Psoas muscle (tissue), 8 donors: ENCODE measurements at regions of chr20 and their contacts with region 1.

Region 1: DNA sequence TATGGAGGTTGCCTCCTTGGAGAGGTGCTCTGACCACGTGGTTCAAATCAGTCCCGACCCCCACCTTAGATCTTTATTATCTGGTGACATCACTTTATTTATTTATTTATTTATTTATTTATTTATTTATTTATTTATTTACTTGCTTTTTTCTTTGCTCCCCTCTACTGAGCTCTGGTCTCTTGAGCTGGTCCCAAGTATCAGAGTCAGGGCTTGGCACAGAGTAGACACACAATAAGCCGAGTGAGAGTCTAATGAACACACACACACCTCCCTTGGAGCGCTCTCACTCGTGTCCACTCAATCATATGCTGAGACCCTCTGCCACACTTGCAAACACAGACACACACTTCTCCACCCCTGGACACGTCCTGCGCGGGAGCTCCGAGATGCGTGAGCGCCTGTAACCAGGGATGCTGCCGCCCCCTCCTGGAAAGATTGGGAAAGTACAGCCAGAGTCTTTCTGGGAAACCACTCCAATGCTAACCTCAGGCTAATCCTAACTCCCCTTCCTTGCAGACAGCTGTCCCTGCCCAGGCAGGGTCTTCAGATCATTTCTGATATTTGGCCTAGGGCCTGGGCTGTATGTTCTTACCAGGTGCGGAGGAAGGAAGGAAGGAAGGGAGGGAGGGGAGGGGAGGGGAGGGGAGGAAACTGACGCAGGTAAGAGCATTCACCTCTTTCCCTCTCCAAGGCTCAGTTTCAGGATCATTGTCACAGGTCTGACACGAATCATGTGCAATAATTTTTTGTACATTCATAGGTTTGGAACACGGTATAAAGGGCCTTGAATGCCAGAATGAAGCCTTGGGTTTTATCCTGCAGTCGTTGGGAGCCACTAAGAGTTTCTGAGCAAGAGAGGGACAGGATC is 70.9 kb downstream of the STK35 start:
- DNase-seq: peak; percentile 73 to 82
- ATAC-seq: peak; percentile 79 to 98 (median 88)
- H3K4me3 ChIP-seq: no peak overlapping the region
- H3K27ac ChIP-seq: no peak overlapping the region
- H3K4me1 ChIP-seq: peaks cover 3% of the 10 kb centered on the region
- H3K27me3 ChIP-seq: no peaks in the 10 kb centered on the region
- CTCF ChIP-seq: peak; percentile 92

Region 2: GRCh38 chr20:1764136-1765033 is 408.2 kb before region 1 on chr20:
- intact Hi-C with region 1: loop called in 1 of 2 experiments (anchors 5 kb)
- DNase-seq: peak; percentile 69 to 72
- ATAC-seq: peak; percentile 79 to 92 (median 85)
- H3K4me3 ChIP-seq: no peak overlapping the region
- H3K27ac ChIP-seq: no peak overlapping the region
- H3K4me1 ChIP-seq: no peaks in the 10 kb centered on the region
- H3K27me3 ChIP-seq: no peaks in the 10 kb centered on the region
- CTCF ChIP-seq: peak; percentile 82

Region 3: GRCh38 chr20:1860446-1860845 is 312.1 kb before region 1 on chr20:
- intact Hi-C with region 1: no loop called
- DNase-seq: no peak
- ATAC-seq: no peak
- H3K4me3 ChIP-seq: no peak overlapping the region
- H3K27ac ChIP-seq: no peak overlapping the region
- H3K4me1 ChIP-seq: no peaks in the 10 kb centered on the region
- H3K27me3 ChIP-seq: peaks cover 0 to 4% (median 4%) of the 10 kb centered on the region in 3 donors
- CTCF ChIP-seq: no peak

Region 4: GRCh38 chr20:1965520-1966351 is 206.8 kb before region 1 on chr20:
- intact Hi-C with region 1: loop called (anchors 1 to 2 kb)
- DNase-seq: peak; percentile 79 to 86
- ATAC-seq: peak; percentile 79 to 98 (median 90)
- H3K4me3 ChIP-seq: peak overlapping the region; percentile 39
- H3K27ac ChIP-seq: no peak overlapping the region
- H3K4me1 ChIP-seq: peaks cover 7% of the 10 kb centered on the region
- H3K27me3 ChIP-seq: peaks cover 0 to 5% (median 0%) of the 10 kb centered on the region in 3 donors
- CTCF ChIP-seq: peak; percentile 94

Region 5: GRCh38 chr20:2005831-2006426 is 166.6 kb before region 1 on chr20:
- intact Hi-C with region 1: loop called in 1 of 2 experiments (anchors 2 kb)
- DNase-seq: peak; percentile 60 to 76
- ATAC-seq: peak in 1 of 4 donors; percentile 30
- H3K4me3 ChIP-seq: no peak overlapping the region
- H3K27ac ChIP-seq: no peak overlapping the region
- H3K4me1 ChIP-seq: no peaks in the 10 kb centered on the region
- H3K27me3 ChIP-seq: peaks cover 0 to 38% (median 5%) of the 10 kb centered on the region in 3 donors
- CTCF ChIP-seq: no peak

Region 6: GRCh38 chr20:2086177-2086979 is 86.2 kb before region 1 on chr20:
- intact Hi-C with region 1: loop called (anchors 2 to 5 kb)
- DNase-seq: no peak
- ATAC-seq: peak in 1 of 4 donors; percentile 42
- H3K4me3 ChIP-seq: no peak overlapping the region
- H3K27ac ChIP-seq: no peak overlapping the region
- H3K4me1 ChIP-seq: no peaks in the 10 kb centered on the region
- H3K27me3 ChIP-seq: peaks cover 0 to 12% (median 2%) of the 10 kb centered on the region in 3 donors
- CTCF ChIP-seq: no peak

Region 7: GRCh38 chr20:2109425-2110210 is 62.9 kb before region 1 on chr20:
- intact Hi-C with region 1: loop called in 1 of 2 experiments (anchors 5 kb)
- DNase-seq: peak; percentile 31 to 88
- ATAC-seq: peak; percentile 51 to 91 (median 74)
- H3K4me3 ChIP-seq: no peak overlapping the region
- H3K27ac ChIP-seq: peak overlapping the region; percentile 40
- H3K4me1 ChIP-seq: peaks cover 48% of the 10 kb centered on the region
- H3K27me3 ChIP-seq: no peaks in the 10 kb centered on the region
- CTCF ChIP-seq: no peak